PC-9 (cell line): ENCODE measurements at regions of chr10 and their contacts with region 1.

Region 1: GRCh38 chr10:75235375-75236177 is at the start of gene COMTD1:
- DNase-seq: peak; percentile 83 to 98
- H3K4me3 ChIP-seq: peak within 1 kb of the TSS; percentile 80
- H3K27ac ChIP-seq: peak within 1 kb of the TSS; percentile 86
- H3K4me1 ChIP-seq: peaks cover 37% of the 10 kb centered on the region
- H3K27me3 ChIP-seq: no peaks in the 10 kb centered on the region
- CTCF ChIP-seq: peak; percentile 99
- total RNA-seq, gene COMTD1: 20.5 and 25.1 TPM in 2 replicates

Region 2: DNA sequence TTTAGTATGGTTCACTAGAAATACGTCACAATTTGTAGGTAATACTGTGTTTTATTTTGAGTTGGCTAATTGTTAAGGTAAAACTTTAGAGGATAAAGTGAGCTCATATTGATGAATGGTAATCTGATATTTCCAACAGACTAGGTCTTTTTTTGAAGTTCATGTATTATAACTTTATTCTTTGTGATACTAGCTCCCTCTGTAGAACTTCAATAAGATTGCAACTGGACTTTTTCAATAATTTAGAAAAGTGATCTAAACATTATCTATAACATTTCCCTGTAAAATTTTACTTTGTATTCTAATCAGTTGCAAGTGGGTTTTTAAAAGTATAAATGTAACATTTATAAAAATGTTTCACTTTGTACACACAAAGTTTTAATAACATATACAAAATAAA is 1001.0 kb before region 1 on chr10:
- CTCF ChIA-PET with region 1: interaction called, 3 read pairs
- POLR2A ChIA-PET with region 1: interaction called, 17 read pairs
- intact Hi-C with region 1: loop called (anchors 5 kb)
- DNase-seq: no peak
- H3K4me3 ChIP-seq: no peak overlapping the region
- H3K27ac ChIP-seq: 0 out of 2 replicates have a peak overlapping the region, but pooled peaks have one; percentile 38
- H3K4me1 ChIP-seq: peaks cover 18% of the 10 kb centered on the region
- H3K27me3 ChIP-seq: no peaks in the 10 kb centered on the region
- CTCF ChIP-seq: peak; percentile 73

Region 3: GRCh38 chr10:75019370-75019769 is 216.2 kb before region 1 on chr10:
- CTCF ChIA-PET with region 1: no interaction called
- POLR2A ChIA-PET with region 1: no interaction called
- intact Hi-C with region 1: loop called (anchors 2 kb)
- DNase-seq: peak in 1 of 2 experiments; percentile 43
- H3K4me3 ChIP-seq: no peak overlapping the region
- H3K27ac ChIP-seq: no peak overlapping the region
- H3K4me1 ChIP-seq: no peaks in the 10 kb centered on the region
- H3K27me3 ChIP-seq: no peaks in the 10 kb centered on the region
- CTCF ChIP-seq: peak; percentile 64

Region 4: DNA sequence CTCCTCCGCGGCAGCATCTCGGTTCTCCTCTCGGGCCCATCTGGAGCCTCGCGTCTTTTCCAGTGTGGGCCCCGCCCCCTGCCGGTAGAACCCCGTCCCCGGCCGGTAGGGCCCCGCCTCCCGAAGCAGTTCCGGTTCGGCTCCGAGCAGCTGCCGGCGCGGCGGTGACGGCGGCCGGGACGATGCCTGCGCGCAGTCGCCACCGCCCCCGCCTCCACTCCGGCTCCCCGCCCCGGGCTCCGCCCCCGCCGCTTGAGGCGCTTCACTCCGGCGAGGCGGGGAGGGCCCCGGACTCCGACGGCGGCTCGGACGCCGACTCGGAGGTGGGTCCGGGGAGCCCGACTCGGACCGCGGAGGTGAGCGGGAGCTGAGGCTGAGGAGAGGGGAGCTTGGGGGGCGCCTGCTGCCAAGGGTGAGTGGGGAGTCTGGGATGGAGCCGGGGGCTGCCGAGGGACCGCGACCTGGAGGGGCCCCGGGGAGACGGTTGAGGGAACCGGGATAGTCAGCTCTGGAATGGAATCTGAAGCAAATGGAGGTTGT is 124.1 kb before region 1 on chr10 and contains the start of gene SAMD8:
- CTCF ChIA-PET with region 1: interaction called, 4 read pairs
- POLR2A ChIA-PET with region 1: interaction called, 16 read pairs
- intact Hi-C with region 1: loop called (anchors 2 kb)
- DNase-seq: peak; percentile 94 to 99
- H3K4me3 ChIP-seq: peak within 1 kb of the TSS; percentile 95
- H3K27ac ChIP-seq: peak within 1 kb of the TSS; percentile 88
- H3K4me1 ChIP-seq: peaks cover 35% of the 10 kb centered on the region
- H3K27me3 ChIP-seq: no peaks in the 10 kb centered on the region
- CTCF ChIP-seq: peak; percentile 43
- total RNA-seq, gene SAMD8: 27.6 and 31.1 TPM in 2 replicates

Region 5: GRCh38 chr10:75210282-75211006 is 25.1 kb before region 1 on chr10 and contains the start of gene VDAC2:
- CTCF ChIA-PET with region 1: interaction called, 10 read pairs
- POLR2A ChIA-PET with region 1: interaction called, 5 read pairs
- intact Hi-C with region 1: loop called (anchors 1 kb)
- DNase-seq: peak; percentile 62 to 94
- H3K4me3 ChIP-seq: peak within 1 kb of the TSS; percentile 77
- H3K27ac ChIP-seq: peak within 1 kb of the TSS; percentile 86
- H3K4me1 ChIP-seq: peaks cover 33% of the 10 kb centered on the region
- H3K27me3 ChIP-seq: no peaks in the 10 kb centered on the region
- CTCF ChIP-seq: no peak
- total RNA-seq, gene VDAC2: 241 and 243 TPM in 2 replicates

Region 6: DNA sequence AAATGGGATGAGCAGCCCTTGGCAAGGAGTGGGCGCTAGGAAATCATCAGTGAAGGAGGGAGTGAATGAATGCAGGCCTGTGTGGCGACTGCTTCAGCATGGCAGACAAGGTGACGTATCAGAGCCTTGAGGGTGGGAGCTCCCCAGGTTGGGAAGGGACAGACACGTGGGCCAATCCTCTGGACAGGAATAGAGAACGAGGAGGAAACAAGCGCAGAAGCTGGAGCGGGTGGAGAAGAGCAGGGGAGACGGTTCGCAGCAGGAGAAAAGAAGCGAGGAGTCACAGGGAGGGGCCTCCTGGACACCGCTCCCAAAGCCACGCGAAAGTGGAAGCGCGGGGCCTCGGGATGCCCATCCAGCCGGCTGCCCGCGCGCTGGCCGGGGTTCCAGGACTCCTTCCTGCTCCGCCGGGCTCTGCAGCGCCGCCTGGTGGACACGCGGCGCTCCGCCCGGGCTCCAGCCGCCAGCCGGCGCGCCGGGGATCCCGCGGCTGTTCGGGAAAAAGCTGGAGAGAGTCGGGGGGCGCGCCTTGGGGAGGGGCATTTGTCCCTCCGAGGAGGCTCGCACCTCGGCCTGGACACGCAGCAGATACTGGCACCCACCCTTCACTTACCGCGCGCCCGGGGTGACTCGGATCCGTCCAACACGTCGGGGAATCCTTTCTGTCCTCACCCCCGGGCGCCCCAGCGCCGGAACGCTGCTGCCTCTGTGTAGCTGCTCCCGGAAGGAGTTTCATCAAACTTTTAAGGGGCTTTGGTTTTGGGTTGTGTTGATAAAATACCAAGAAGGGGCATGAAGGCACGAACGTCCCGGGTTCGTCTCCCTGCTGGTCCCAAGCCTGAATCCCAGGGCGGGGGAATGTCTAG is 159.7 kb after region 1 on chr10:
- CTCF ChIA-PET with region 1: no interaction called
- POLR2A ChIA-PET with region 1: no interaction called
- intact Hi-C with region 1: loop called (anchors 2 kb)
- DNase-seq: peak; percentile 58 to 60
- H3K4me3 ChIP-seq: peak overlapping the region; percentile 84
- H3K27ac ChIP-seq: peak overlapping the region; percentile 90
- H3K4me1 ChIP-seq: peaks cover 14% of the 10 kb centered on the region
- H3K27me3 ChIP-seq: no peaks in the 10 kb centered on the region
- CTCF ChIP-seq: peak; percentile 90